Tibial artery (tissue), 4 donors: ENCODE measurements at regions of chr11 and their contacts with region 1.

Region 1: DNA sequence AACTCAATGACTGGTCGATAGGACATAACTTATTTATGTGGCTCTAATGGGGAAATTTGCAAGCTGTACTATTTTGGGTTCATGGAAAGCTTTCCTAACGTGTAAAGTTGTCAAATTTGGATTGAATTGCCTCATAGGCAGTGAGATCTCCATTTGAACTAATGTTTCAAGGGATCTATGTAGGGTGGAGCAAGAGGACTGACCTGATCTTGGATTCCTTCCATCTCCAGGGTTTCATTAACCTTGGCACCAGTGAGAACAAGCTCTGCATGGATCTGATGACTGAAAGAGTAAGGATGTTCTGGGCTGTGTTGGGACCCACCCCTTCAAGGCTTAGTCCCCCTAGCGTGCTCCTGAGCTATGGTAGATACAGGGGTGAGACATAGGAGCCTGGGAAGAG is 2.1 kb downstream of the ACCSL start:
- DNase-seq: no peak
- H3K4me3 ChIP-seq: no peak overlapping the region
- H3K27ac ChIP-seq: no peak overlapping the region
- H3K4me1 ChIP-seq: no peaks in the 10 kb centered on the region
- H3K27me3 ChIP-seq: no peaks in the 10 kb centered on the region
- CTCF ChIP-seq: no peak

Region 2: DNA sequence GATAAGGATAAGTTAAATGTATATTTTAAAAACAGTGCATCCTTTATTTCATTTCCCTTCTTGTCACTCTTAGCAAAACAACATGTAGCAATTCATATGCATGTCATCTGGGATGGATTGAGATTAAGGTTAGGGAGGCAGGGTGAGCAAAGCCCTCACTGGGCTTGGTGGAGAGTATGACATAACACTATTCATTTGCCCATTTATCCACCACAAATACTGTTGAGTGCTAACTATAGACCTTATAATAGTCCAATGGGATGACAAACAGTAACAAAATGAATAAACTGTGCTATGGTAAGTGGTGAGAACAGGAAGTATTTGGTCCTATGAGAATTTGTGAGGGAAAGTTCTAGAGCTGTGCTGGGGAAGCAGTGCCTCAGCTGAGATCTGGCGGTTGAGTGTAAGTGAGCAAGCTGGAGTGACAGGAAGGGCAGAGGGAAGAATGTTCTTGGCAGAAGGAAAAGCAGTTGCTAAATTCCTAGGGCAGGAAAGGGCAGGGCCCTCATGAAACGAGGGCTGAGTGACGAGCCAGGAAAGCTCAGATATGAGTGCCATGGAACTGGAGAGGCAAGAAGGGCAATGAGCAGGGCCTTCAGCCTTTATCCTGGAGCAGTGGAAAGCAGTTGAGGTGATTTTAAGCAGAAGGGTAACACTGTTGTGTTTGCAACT is 362.6 kb before region 1 on chr11:
- intact Hi-C with region 1: loop called (anchors 5 kb)
- DNase-seq: peak; percentile 43 to 77
- H3K4me3 ChIP-seq: no peak overlapping the region
- H3K27ac ChIP-seq: peak overlapping the region; percentile 31 to 37
- H3K4me1 ChIP-seq: peaks cover 0 to 42% (median 11%) of the 10 kb centered on the region in 4 donors
- H3K27me3 ChIP-seq: no peaks in the 10 kb centered on the region
- CTCF ChIP-seq: no peak

Region 3: DNA sequence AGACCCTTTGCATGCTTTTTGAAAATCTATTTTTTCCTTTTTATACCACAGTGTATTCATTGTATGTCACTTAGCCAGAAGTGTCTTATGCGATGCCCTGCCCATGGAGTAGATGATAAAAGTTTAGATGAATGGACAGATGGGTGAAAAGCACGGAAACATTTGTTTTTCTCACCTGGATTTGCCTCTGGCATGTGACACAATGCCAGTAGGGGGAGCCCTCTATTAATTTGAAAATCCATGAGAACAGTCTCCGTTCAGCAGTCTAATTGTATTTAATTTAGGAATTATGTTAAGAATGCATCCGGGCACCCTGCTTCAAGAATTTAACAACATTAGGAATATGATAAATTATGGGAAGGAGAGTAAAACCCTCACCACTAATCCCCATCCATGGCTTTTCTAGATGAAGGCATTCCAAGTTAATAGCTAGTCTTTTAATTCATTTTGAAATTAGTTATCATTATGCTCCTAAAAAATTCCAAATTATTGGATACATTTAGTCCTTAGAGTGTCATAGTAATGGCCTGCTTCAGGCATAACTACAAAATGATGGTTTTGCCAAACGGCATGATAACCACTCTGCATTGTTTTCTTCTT is 224.5 kb before region 1 on chr11:
- intact Hi-C with region 1: no loop called
- DNase-seq: no peak
- H3K4me3 ChIP-seq: no peak overlapping the region
- H3K27ac ChIP-seq: no peak overlapping the region
- H3K4me1 ChIP-seq: peaks cover 0 to under 1% (median 0%) of the 10 kb centered on the region in 4 donors
- H3K27me3 ChIP-seq: no peaks in the 10 kb centered on the region
- CTCF ChIP-seq: peak; percentile 23 to 57

Region 4: GRCh38 chr11:44178381-44178780 is 128.5 kb after region 1 on chr11:
- intact Hi-C with region 1: no loop called
- DNase-seq: no peak
- H3K4me3 ChIP-seq: no peak overlapping the region
- H3K27ac ChIP-seq: no peak overlapping the region
- H3K4me1 ChIP-seq: peaks cover 0 to 9% (median 0%) of the 10 kb centered on the region in 4 donors
- H3K27me3 ChIP-seq: no peaks in the 10 kb centered on the region
- CTCF ChIP-seq: no peak